Motor neuron (in vitro differentiated cells): ENCODE measurements at regions of chr17 and their contacts with region 1.

Region 1: DNA sequence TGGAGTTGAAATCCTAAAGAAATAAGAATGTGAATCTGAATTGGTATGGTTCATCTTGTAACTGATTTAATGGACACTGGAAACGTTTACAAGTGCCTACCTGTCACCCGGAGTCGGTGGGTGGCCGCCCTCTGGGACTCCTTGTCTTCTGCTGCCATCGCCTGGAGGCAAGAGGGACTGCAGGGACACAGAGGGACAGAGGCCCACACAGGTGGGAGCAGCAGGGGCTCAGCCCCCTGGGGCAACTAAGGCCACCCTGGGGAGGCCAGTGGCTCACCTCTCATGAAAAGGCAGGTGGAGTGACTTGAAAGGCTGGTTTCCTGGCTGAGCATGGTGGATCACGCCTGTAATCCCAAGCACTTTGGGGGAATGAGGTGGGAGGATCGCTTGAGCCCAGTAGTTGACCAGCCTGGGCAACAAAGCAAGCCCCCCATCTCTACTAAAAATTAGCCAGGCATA is 23.2 kb downstream of the TMEM92 start:
- ATAC-seq: peak; percentile 84 to 99 (median 94)
- H3K4me3 ChIP-seq: no peak overlapping the region
- H3K27ac ChIP-seq: no peak overlapping the region
- H3K4me1 ChIP-seq: peaks cover 0 to 3% of the 10 kb centered on the region in 2 donors

Region 2: GRCh38 chr17:49093082-49093741 is 1204.2 kb before region 1 on chr17:
- in situ Hi-C with region 1: no loop called
- ATAC-seq: peak in 1 of 8 experiments; percentile 59
- H3K4me3 ChIP-seq: no peak overlapping the region
- H3K27ac ChIP-seq: no peak overlapping the region
- H3K4me1 ChIP-seq: no peaks in the 10 kb centered on the region

Region 3: DNA sequence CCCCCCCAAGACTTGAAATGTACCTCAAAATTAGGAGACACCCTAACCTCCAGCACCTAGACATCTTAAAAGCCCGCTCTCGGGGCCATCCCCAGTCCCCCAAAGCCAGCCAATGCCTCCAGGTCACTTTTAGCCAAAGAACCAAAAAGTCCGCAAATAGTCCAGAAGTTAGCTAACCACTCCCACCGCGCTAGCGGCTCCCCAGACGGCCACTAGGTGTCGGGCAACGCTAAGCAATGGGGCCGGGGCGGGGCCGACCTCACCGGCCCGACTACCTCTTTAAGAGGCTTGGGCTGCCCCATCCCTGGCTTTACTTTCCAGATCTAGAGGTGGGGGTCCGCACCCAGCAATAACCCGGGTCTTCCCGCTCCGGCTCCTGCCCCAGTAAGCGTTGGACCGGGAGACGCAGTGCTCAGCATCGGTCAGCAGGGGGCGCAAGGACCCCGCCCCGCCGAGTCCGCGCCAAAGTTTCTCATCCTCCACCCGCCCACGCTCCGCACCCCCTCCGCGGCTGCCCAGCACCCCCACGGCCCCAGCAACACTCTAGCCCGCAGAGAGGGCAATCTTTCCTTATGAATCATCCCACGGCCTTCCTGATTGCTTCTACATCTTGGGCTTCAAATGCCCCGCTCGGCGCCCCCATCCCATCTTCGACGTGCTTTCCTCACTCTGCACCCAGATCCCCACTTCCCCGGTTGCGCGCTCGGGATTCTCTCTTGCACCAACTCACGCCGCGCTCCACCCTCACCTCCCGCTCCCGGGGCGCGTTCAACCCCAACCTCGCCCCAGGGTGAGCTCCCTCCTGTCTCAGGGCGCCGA is 96.8 kb before region 1 on chr17:
- in situ Hi-C with region 1: loop called in 5 of 9 experiments (anchors 10 to 25 kb)
- ATAC-seq: peak; percentile 70 to 90 (median 88)
- H3K4me3 ChIP-seq: peak overlapping the region; percentile 33 to 44 (median 37)
- H3K27ac ChIP-seq: no peak overlapping the region
- H3K4me1 ChIP-seq: peaks cover 0 to 7% of the 10 kb centered on the region in 2 donors